ENCODE measurements at regions of chr17 and their contacts with region 1.

Region 1: DNA sequence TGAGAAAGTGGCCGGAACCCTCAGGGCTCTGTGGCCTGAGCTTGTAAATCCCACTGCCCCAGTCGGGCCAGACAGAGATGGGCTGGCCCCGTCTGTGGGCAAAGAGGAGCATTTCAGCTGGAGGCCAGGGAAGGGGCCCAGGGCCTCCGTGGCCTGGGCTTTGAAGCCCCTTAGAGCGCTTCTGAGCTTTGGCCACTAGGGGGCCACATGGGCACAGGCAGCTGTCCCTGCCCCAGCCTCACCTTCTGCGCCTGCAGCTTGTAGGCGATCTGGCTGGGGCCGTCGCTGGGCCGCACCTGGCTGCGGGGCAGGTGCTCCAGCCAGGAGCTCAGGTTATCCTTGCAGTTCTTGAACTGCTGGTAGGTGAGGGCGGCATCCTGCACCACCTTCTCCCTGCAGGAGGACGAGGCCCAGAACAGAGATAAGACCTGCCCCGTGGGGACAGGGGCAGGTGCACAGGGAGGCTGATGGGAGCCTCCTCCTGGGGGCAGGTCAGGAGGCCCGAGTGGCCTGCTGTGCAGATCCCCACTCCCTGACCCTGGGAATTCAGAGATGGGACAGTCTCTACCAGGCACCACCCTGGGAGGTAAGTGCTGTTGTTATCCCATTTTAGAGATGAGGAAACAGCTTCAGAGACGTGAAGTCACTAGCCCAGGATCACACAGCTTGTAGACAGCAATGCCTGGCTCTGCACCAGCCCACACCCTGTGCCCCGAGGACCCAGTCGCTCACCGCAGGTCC is 12.8 kb downstream of the EVPL start:
- DNase-seq: peak; percentile 93
- H3K4me3 ChIP-seq: no peak overlapping the region
- H3K27ac ChIP-seq: no peak overlapping the region
- H3K4me1 ChIP-seq: peaks cover 14% of the 10 kb centered on the region
- CTCF ChIP-seq: peak; percentile 99

Region 2: GRCh38 chr17:75827252-75828115 is 186.9 kb before region 1 on chr17:
- CTCF ChIA-PET with region 1: no interaction called
- POLR2A ChIA-PET with region 1: no interaction called
- intact Hi-C with region 1: no loop called
- DNase-seq: peak; percentile 71
- H3K4me3 ChIP-seq: peak overlapping the region; percentile 39
- H3K27ac ChIP-seq: peak overlapping the region; percentile 9
- H3K4me1 ChIP-seq: peaks cover 20% of the 10 kb centered on the region
- CTCF ChIP-seq: peak; percentile 82

Region 3: GRCh38 chr17:76027159-76027839 is 12.9 kb after region 1 on chr17 and contains the start of gene EVPL:
- CTCF ChIA-PET with region 1: interaction called, 14 read pairs
- POLR2A ChIA-PET with region 1: interaction called, 12 read pairs
- intact Hi-C with region 1: no loop called
- DNase-seq: no peak
- H3K4me3 ChIP-seq: no peak within 1 kb of the TSS
- H3K27ac ChIP-seq: no peak within 1 kb of the TSS
- H3K4me1 ChIP-seq: peaks cover 20% of the 10 kb centered on the region
- CTCF ChIP-seq: no peak
- total RNA-seq, gene EVPL: 5.6 and 9.9 TPM in 2 replicates

Region 4: DNA sequence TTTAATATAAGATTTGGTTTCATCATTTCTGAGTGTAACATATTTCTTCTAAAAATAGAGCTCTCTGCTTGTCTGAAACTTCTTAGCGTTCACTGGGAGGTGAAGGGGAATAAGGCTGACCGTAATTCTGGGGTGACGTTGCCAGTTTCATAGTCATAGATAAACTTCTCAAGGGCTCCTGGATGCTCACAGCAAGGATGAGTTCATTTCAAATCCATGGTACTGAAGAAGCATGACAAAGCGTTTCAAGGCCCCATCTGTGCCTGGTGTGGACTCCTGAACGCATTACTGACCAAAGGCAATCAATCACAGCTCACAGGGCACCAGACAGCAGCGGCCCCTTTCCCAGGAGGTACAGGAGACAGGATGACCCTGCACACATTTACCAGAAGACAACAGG is 24.8 kb after region 1 on chr17:
- CTCF ChIA-PET with region 1: no interaction called
- POLR2A ChIA-PET with region 1: no interaction called
- intact Hi-C with region 1: no loop called
- DNase-seq: no peak
- H3K4me3 ChIP-seq: no peak overlapping the region
- H3K27ac ChIP-seq: no peak overlapping the region
- H3K4me1 ChIP-seq: no peaks in the 10 kb centered on the region
- CTCF ChIP-seq: no peak

Region 5: DNA sequence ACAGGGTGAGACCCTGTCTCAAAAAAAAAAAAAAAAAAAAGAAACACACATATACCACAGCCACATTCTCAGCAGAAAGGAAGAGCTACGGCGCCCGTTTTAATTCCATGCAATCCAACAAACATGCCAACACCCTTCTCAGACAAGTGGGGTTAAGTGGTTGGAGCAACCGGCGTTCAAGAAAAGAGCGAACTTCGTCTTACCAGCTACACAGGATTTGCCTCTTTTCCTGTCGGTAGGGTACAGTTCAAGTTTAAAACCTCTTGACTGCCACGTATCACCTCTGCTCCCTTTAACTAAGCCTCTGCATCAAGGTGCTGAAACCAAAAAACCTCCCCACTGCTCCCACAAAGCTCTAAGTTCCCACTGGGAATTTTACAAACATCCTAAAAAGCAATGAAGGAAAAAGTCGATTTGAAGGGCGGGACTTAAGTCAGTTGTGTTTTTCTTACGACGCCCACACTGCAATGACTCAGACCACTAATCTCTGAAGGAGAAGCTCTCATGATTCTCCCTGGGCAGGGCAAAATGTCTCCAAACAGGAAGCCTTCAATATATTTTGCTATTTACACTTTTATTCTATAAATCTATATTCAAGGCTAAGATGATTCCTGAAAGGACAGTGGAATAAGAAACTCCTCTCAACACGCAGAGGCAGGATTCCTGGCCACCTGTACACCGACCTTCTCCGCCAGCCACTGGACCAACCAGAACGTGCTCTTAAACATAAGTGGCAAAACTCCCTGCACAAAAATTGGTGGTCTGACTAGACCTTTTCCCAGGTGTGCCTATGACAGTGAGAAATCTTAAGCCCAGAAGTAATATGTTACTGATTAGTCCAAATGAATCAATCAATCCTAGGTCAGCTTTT is 39.1 kb after region 1 on chr17:
- CTCF ChIA-PET with region 1: interaction called, 3 read pairs
- POLR2A ChIA-PET with region 1: interaction called, 7 read pairs
- intact Hi-C with region 1: loop called (anchors 2 kb)
- DNase-seq: no peak
- H3K4me3 ChIP-seq: no peak overlapping the region
- H3K27ac ChIP-seq: no peak overlapping the region
- H3K4me1 ChIP-seq: peaks cover 19% of the 10 kb centered on the region
- CTCF ChIP-seq: no peak

Region 6: DNA sequence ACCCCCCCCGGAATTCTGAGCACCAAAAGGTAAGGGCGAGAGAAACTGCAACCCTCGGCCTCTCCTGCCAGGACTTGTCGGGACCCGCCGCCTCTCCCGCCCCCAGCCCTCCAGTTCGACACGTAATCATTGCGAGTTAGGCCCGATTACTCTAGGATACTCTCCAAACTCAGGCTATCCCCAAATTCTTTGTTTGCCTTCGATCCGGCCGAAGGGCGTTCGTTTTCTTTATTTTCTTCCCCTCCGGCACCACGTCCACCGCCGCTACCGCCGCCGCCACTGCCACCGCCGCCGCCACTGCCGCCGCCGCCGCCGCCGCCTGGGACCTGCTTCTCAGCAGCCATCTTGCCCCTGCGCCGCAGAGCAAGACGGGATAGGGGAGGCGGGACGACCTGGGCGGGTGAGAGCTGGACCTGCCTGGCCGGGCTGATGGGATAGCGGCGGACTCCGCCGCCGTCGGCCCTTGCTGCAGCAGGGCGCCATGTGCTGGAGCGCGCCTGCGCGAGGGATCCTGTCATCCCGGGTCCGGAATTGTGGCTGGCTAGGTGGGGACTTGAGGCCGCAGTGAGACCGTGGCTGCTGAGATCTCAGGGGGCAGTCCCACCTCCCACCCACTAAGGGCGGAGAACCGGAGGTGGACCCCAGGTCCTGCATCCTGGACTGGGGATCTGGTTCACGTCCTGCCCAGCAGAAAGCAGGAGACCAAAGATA is 57.9 kb after region 1 on chr17 and contains the start of gene SRP68:
- CTCF ChIA-PET with region 1: no interaction called
- POLR2A ChIA-PET with region 1: interaction called, 12 read pairs
- intact Hi-C with region 1: loop called (anchors 1 kb)
- DNase-seq: peak; percentile 90
- H3K4me3 ChIP-seq: peak within 1 kb of the TSS; percentile 78
- H3K27ac ChIP-seq: peak within 1 kb of the TSS; percentile 72
- H3K4me1 ChIP-seq: peaks cover 20% of the 10 kb centered on the region
- CTCF ChIP-seq: no peak
- total RNA-seq, gene SRP68: 53.5 and 54.0 TPM in 2 replicates

Region 7: DNA sequence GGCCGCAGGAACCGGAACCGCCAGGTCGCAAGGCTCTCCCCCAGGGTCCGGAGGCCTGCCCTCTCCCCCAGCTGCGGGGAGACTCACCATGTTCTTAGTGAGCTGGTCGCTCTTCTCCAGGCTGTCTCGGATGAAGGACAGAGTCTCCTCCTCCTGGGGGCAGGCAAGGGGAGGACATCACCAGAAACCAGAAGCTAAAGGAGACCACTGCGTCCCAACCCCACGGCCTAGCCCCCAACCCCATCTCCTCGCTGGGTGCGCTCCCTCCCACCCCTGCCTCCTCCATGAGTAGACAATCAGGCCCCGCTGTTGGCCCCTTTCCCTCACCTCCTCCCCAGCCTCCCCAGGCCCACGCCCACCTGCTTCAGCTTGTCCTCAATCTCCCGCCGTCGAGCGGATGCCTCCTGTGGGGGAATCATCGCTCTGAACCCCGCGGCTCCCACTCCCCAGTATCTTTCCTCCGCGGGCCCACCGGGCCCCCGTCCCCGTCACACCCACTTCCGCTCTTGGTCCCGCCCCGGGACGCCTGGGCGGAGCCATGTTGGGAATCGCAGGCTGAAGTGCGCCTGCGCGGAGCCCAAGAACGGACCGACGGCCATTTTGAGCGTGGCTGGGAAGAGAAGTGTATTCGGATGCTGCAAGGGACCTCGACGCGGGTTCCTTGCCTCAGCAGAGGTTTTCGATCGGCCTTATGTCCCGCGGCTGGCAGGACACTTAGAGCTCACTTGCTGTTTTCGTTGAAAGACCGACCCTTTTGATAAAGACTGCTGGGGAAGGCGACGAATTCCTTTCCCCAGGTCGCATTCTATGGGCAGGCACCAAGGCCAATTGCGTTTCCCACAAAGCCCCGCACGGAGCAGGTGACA is 89.2 kb after region 1 on chr17 and contains the start of gene EXOC7:
- CTCF ChIA-PET with region 1: interaction called, 7 read pairs
- POLR2A ChIA-PET with region 1: interaction called, 5 read pairs
- intact Hi-C with region 1: loop called (anchors 1 kb)
- DNase-seq: peak; percentile 99
- H3K4me3 ChIP-seq: peak within 1 kb of the TSS; percentile 79
- H3K27ac ChIP-seq: peak within 1 kb of the TSS; percentile 32
- H3K4me1 ChIP-seq: peaks cover 29% of the 10 kb centered on the region
- CTCF ChIP-seq: no peak
- total RNA-seq, gene EXOC7: 118 and 122 TPM in 2 replicates

Region 8: GRCh38 chr17:76191896-76192295 is 177.5 kb after region 1 on chr17:
- CTCF ChIA-PET with region 1: no interaction called
- POLR2A ChIA-PET with region 1: no interaction called
- intact Hi-C with region 1: no loop called
- DNase-seq: peak; percentile 77
- H3K4me3 ChIP-seq: no peak overlapping the region
- H3K27ac ChIP-seq: no peak overlapping the region
- H3K4me1 ChIP-seq: peaks cover 23% of the 10 kb centered on the region
- CTCF ChIP-seq: no peak

Region 9: GRCh38 chr17:76278952-76279741 is 264.8 kb after region 1 on chr17:
- CTCF ChIA-PET with region 1: no interaction called
- POLR2A ChIA-PET with region 1: no interaction called
- intact Hi-C with region 1: loop called (anchors 5 kb)
- DNase-seq: peak; percentile 88
- H3K4me3 ChIP-seq: no peak overlapping the region
- H3K27ac ChIP-seq: no peak overlapping the region
- H3K4me1 ChIP-seq: peaks cover 12% of the 10 kb centered on the region
- CTCF ChIP-seq: peak; percentile 100

Region 10: DNA sequence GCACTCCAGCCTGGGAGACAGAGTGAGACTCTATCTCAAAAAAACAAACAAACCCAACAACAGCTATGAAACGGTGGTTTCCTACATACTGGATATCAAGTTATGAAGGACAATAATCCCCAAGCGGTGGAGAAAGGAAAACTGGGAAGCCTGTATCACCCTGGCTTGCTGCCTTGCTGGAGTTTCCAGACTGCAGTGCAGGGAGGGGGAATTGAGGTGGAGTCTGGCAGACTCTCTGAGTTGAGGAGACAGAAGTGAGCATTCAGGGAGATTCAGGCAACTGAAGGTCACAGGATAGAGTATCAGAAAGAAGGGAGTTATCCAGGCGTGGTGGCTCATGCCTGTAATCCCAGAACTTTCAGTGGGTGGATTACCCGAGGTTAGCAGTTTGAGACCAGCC is 281.8 kb after region 1 on chr17:
- CTCF ChIA-PET with region 1: no interaction called
- POLR2A ChIA-PET with region 1: no interaction called
- intact Hi-C with region 1: loop called (anchors 2 kb)
- DNase-seq: no peak
- H3K4me3 ChIP-seq: no peak overlapping the region
- H3K27ac ChIP-seq: no peak overlapping the region
- H3K4me1 ChIP-seq: no peaks in the 10 kb centered on the region
- CTCF ChIP-seq: no peak

Measured in OCI-LY7 (cell line).